Posterior vena cava (tissue), 2 donors: ENCODE measurements at regions of chr3 and their contacts with region 1.

Region 1: GRCh38 chr3:45938864-45939263 is 4.4 kb upstream of the CXCR6 start:
- DNase-seq: peak; percentile 93

Region 2: DNA sequence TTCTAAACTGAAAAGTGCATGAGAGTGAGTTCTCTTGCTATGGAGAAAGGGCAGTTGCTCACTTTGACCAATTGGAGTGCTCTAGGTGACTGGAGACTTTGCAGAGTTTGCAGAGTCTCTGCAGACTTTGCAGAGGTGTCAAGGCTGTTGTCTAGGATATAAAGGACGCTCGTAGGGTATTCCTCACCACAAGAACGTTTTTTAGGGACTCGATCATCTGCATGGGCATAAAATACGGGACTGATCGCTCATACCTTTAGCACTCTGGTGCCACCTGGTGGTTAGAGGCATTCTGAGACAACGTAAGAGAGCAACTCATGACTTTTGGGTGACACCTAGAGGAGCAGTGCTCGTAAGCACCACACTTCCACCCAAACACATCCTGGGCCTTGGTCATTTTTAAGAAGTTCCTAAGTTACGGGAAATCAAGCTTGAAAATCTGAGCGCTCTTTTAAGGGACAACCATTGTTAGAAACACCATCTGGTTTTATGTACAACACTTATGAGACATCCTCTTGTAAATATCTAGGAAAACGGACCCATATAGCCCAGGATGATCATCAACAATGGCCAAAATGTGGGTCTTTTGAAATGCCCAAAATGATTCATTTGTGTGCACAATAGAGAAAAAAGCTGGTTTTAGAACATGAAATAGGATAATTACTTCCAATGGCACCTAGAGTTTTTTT is 140.0 kb after region 1 on chr3:
- intact Hi-C with region 1: loop called (anchors 5 to 10 kb)
- DNase-seq: peak; percentile 91